ENCODE measurements at regions of chr3 and their contacts with region 1.

Region 1: DNA sequence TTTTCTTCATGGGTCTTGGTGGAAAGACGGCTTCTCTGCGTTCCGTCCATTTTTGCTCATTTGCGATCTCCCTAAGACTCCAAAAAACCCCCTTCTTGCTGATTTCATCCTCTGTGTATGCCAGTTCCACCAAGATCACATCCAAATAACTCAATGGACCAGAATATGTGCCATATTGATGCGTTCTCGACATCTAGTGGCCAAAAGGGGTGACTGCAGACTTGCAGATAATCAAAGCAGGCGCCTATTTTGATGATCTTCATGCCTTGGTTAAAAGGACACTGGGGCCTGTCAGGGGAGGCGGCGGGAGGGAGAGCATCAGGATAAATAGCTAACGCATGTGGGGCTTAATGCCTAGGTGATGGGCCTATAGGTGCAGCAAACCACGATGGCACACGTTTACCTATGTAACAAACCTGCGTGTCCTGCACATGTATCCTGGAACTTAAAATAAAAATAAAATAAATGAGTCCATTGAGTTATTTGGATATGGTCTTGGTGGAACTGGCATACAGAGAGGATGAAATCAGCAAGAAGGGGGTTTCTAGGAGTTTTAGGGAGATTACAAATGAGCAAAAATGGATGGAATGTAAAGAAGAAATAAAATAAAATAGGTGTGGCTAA is 104.2 kb upstream of the RAD18 start:
- DNase-seq: peak; percentile 50
- H3K4me3 ChIP-seq: no peak overlapping the region
- H3K27ac ChIP-seq: no peak overlapping the region
- H3K4me1 ChIP-seq: no peaks in the 10 kb centered on the region
- H3K27me3 ChIP-seq: no peaks in the 10 kb centered on the region
- CTCF ChIP-seq: peak; percentile 90

Region 2: DNA sequence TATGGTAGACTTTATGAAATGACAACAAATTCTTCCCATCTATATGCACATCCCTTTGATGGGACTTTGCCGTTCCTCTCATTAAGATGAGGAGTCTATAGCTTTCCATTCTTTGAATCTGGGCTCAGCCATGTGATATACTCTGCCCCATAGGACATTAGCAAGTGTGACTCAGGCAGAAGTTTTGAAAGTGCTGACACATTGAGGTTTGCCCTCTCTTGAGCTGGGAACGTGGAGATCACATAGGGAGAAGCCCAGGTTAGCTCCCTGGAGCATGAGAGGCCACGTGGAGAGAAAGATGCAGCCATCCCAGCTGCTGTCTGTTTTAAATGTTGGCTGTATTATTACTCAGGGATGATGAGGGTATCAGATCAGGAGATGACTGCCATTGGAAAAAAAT is 230.3 kb before region 1 on chr3:
- intact Hi-C with region 1: no loop called
- DNase-seq: no peak
- H3K4me3 ChIP-seq: no peak overlapping the region
- H3K27ac ChIP-seq: no peak overlapping the region
- H3K4me1 ChIP-seq: no peaks in the 10 kb centered on the region
- H3K27me3 ChIP-seq: no peaks in the 10 kb centered on the region
- CTCF ChIP-seq: no peak

Region 3: DNA sequence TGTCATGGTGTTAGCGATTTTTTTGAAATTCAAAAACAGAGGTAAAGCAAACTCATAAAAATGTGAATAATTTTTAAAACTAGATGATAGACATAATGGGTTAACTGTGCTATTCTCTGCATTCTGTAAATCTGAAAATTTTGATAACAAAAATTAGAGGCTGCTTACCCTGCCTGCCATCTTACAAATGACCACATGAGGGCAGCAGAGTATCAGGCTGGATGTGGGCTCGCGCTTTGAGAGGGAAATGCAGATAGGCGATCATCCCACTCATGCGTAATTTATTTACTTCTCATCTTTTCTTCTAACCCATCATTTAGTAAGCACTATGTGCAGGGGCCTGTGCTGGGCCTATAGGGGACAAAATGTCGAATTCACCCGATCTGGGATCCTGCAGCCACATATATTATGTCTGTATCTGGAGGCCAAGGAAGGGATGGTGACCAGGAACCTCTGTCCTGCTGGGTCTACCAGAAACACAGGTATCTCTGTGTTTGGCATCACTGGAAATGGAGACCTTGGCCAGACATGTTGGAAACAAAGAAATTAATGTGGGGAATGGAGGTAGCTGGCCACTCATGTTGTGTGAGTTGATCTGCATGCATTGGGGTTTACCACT is 96.4 kb before region 1 on chr3:
- intact Hi-C with region 1: loop called (anchors 5 kb)
- DNase-seq: peak; percentile 77
- H3K4me3 ChIP-seq: no peak overlapping the region
- H3K27ac ChIP-seq: no peak overlapping the region
- H3K4me1 ChIP-seq: no peaks in the 10 kb centered on the region
- H3K27me3 ChIP-seq: no peaks in the 10 kb centered on the region
- CTCF ChIP-seq: peak; percentile 93

Region 4: DNA sequence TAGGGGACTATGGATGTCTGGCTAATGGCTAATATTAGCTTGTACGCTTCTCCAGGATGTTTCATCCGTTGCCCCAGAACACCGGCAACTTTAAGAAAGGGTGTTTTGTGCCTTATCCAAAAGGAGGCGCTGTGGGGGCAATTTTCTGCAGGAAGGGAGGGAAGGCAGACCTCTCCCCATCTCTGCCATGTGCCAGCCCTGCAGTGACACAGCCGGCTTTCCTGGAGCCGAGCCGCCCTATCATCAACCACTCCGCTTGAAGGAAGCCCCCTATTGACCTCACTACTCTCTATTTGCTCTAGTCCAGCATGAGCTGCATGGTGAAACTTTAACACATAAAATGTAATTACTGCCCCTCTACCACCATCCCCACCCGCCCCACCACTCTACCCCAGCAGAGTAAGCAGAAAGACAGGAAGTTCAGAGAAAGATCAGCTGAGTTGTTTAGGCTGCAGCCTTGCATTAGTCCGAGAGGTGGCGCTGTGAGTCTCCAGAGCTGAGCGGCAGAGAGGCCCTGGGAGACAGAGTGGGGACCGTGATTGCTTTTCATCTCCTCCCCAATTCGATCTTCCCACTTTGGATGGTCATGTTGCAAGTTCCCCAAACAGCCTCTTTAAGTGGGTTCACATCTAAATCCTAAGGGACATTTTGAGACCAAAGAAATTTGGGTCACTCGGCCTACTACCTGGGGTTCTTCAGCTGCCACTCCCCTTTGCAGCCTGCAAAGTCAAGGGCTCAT is 79.7 kb before region 1 on chr3:
- intact Hi-C with region 1: loop called (anchors 2 kb)
- DNase-seq: peak; percentile 57
- H3K4me3 ChIP-seq: no peak overlapping the region
- H3K27ac ChIP-seq: no peak overlapping the region
- H3K4me1 ChIP-seq: no peaks in the 10 kb centered on the region
- H3K27me3 ChIP-seq: no peaks in the 10 kb centered on the region
- CTCF ChIP-seq: peak; percentile 78